Spleen (tissue), 13 donors: ENCODE measurements at regions of chr7 and their contacts with region 1.

Region 1: DNA sequence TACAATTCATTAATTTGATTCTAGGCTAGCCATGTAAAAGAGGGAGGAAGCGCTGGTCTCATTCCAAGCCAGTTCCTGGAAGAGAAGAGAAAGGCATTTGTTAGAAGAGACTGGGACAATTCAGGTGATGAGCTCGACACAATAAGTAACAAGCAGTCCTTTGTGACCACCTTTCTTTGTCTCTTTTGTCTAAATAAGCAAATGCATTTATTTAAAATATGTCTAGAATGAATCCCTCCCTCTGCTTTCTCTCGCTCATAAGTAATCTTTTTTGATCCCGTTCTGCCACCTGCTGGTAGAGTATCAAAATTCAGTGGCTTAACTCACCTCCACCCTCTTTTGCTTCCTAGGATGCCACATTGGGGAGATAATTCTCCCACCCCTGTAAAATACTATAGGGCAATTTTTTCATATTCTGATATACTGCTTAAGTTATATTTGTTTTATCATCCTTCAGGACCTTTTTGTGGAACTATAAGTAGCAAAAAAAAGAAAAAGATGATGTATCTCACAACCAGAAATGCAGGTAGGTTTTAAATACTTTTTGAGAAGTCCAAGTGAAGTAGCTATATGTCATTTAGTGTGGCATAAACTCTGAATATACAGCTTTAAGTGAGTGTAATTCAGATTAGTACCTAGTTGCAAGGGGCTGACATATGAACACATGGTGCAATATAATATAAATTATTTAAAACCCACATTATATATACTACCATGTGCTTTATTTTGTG is 91.5 kb downstream of the GSDME start:
- DNase-seq: no peak
- H3K4me3 ChIP-seq: no peak overlapping the region
- H3K27ac ChIP-seq: no peak overlapping the region
- H3K4me1 ChIP-seq: no peaks in the 10 kb centered on the region
- H3K27me3 ChIP-seq: no peaks in the 10 kb centered on the region
- CTCF ChIP-seq: peak in 10 of 11 experiments; percentile 38 to 74 (median 58)
- POLR2A ChIP-seq: no peak

Region 2: GRCh38 chr7:24199978-24200377 is 465.8 kb before region 1 on chr7:
- intact Hi-C with region 1: no loop called
- DNase-seq: no peak
- H3K4me3 ChIP-seq: no peak overlapping the region
- H3K27ac ChIP-seq: no peak overlapping the region
- H3K4me1 ChIP-seq: no peaks in the 10 kb centered on the region
- H3K27me3 ChIP-seq: no peaks in the 10 kb centered on the region
- CTCF ChIP-seq: no peak
- POLR2A ChIP-seq: no peak

Region 3: GRCh38 chr7:24290004-24290641 is 375.6 kb before region 1 on chr7:
- intact Hi-C with region 1: loop called (anchors 10 kb)
- DNase-seq: no peak
- H3K4me3 ChIP-seq: no peak overlapping the region
- H3K27ac ChIP-seq: no peak overlapping the region
- H3K4me1 ChIP-seq: peaks cover 0 to 9% (median 2%) of the 10 kb centered on the region in 6 donors
- H3K27me3 ChIP-seq: peaks cover 0 to 46% (median 10%) of the 10 kb centered on the region in 7 donors
- CTCF ChIP-seq: peak in 7 of 11 experiments; percentile 17 to 45 (median 30)
- POLR2A ChIP-seq: no peak

Region 4: GRCh38 chr7:24401628-24402593 is 263.8 kb before region 1 on chr7:
- intact Hi-C with region 1: loop called (anchors 10 kb)
- DNase-seq: no peak
- H3K4me3 ChIP-seq: no peak overlapping the region
- H3K27ac ChIP-seq: no peak overlapping the region
- H3K4me1 ChIP-seq: no peaks in the 10 kb centered on the region
- H3K27me3 ChIP-seq: no peaks in the 10 kb centered on the region
- CTCF ChIP-seq: peak in 5 of 11 experiments; percentile 9 to 42 (median 15)
- POLR2A ChIP-seq: no peak